ENCODE measurements at regions of chr16 and their contacts with region 1.

Region 1: DNA sequence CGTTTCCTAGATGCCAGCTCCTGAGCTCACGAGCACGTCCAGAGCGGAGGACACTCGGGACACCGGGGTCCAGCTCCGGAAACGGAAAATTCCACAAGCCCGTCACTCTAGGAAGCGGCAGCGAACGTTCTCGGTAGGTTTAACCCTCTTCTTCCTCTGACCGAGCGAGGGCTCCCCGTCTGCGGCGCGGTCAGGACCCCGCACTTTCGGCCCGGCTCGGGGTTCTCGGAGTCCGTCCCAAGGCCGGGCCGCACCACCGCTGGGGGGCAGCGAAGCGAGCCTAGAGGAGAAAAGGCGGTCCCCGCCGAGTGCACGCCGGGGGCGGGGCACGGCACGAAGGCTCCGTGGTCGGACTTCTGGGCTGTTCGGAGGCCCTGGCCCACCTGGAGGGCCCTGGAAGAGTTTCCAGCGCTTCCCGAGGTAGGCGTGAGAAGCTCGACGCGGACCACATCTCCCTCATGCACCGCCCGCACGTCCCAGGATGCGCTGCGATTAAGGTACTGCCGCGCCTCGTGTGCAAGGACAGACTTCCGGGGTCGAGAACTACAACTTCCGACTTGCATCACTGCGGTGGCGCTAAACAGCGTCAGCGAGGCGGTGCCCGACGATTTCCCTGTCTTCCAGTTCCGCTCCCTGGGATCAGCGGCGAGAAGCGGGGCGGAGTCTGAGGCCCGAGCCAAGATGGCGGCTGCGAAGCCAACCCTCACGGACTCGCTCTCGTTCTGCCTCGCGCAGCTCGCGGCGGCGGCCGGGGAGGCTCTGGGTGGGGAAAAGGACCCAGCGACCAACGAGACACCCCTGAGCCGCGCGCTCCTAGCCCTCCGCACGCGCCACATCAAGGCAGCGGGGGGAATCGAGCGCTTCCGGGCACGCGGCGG is at the start of gene ARMC5:
- DNase-seq: peak; percentile 79 to 98 (median 88)
- ATAC-seq: peak; percentile 81
- H3K4me3 ChIP-seq: peak within 1 kb of the TSS; percentile 83
- H3K27ac ChIP-seq: peak within 1 kb of the TSS; percentile 99
- H3K4me1 ChIP-seq: peaks cover 30 to 52% of the 10 kb centered on the region in 2 experiments
- H3K27me3 ChIP-seq: no peaks in the 10 kb centered on the region
- CTCF ChIP-seq: peak; percentile 71 to 80 (median 79)
- EP300 ChIP-seq: peak; percentile 13; the same call in 1 of the 2 replicates
- POLR2A ChIP-seq: peak; percentile 97
- RAD21 ChIP-seq: peak; percentile 39 to 53; a peak in 3 of 4 replicates
- polyA plus RNA-seq, gene ARMC5: 0.11 to 0.17 TPM

Region 2: GRCh38 chr16:30957456-30958174 is 501.5 kb before region 1 on chr16 and contains the start of gene SETD1A:
- CTCF ChIA-PET with region 1: no interaction called
- POLR2A ChIA-PET with region 1: no interaction called
- in situ Hi-C with region 1: no loop called
- intact Hi-C with region 1: loop called (anchors 10 kb)
- DNase-seq: peak; percentile 77 to 97 (median 89)
- ATAC-seq: peak; percentile 89
- H3K4me3 ChIP-seq: peak within 1 kb of the TSS; percentile 96
- H3K27ac ChIP-seq: peak within 1 kb of the TSS; percentile 99
- H3K4me1 ChIP-seq: peaks cover 27 to 35% of the 10 kb centered on the region in 2 experiments; a peak in 4 of 5 replicates
- H3K27me3 ChIP-seq: no peaks in the 10 kb centered on the region
- CTCF ChIP-seq: no peak
- EP300 ChIP-seq: peak; percentile 95
- POLR2A ChIP-seq: peak; percentile 74
- RAD21 ChIP-seq: no peak
- polyA plus RNA-seq, gene SETD1A: 0.08 to 0.14 TPM

Region 3: DNA sequence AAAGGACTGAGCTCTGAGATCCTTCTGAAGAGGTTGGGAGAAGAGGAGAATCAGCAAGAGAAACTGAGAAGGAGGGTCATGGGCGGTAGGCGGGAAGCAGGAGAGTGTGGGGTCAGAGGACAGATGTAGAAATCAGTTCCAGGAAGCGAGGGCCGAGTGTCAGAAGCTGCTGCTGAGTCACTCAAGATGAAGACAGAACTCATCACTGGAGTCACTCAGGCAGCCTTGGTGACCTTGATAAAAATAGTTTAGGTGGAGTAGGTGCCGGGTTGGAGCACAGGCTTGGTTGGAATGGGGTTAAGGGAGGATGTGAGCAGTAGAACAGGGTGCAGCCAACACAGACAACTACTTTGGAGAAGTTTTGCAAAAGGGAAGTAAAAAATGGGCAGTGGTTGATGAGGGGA is 205.4 kb before region 1 on chr16:
- CTCF ChIA-PET with region 1: no interaction called
- POLR2A ChIA-PET with region 1: no interaction called
- in situ Hi-C with region 1: no loop called
- intact Hi-C with region 1: no loop called
- DNase-seq: peak; percentile 74 to 95 (median 84)
- ATAC-seq: peak; percentile 98
- H3K4me3 ChIP-seq: no peak overlapping the region
- H3K27ac ChIP-seq: peak overlapping the region; percentile 52
- H3K4me1 ChIP-seq: peaks cover 23 to 29% of the 10 kb centered on the region in 2 experiments
- H3K27me3 ChIP-seq: no peaks in the 10 kb centered on the region
- CTCF ChIP-seq: no peak; a peak in 1 of 6 replicates
- EP300 ChIP-seq: peak; percentile 88
- POLR2A ChIP-seq: no peak
- RAD21 ChIP-seq: no peak; a peak in 1 of 4 replicates

Region 4: DNA sequence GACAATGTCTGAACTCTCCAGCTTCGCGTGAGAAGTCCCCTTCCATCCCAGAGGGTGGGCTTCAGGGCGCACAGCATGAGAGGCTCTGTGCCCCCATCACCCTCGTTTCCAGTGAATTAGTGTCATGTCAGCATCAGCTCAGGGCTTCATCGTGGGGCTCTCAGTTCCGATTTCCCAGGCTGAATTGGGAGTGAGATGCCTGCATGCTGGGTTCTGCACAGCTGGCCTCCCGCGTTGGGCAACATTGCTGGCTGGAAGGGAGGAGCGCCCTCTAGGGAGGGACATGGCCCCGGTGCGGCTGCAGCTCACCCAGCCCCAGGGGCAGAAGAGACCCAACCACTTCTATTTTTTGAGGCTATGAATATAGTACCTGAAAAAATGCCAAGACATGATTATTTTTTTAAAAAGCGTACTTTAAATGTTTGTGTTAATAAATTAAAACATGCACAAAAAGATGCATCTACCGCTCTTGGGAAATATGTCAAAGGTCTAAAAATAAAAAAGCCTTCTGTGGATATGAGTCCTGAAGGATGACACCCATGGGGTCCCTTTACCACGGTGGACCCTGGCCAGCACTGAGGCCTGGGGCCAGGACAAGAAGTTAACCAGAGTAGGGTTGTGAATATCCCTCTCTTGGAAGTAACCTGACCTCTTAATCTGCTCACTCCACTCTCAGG is 76.5 kb before region 1 on chr16:
- CTCF ChIA-PET with region 1: no interaction called
- POLR2A ChIA-PET with region 1: no interaction called
- in situ Hi-C with region 1: no loop called
- intact Hi-C with region 1: no loop called
- DNase-seq: peak; percentile 71 to 82 (median 72)
- ATAC-seq: peak; percentile 96
- H3K4me3 ChIP-seq: no peak overlapping the region
- H3K27ac ChIP-seq: no peak overlapping the region
- H3K4me1 ChIP-seq: peaks cover 0 to 5% of the 10 kb centered on the region in 2 experiments; a peak in 2 of 5 replicates
- H3K27me3 ChIP-seq: peaks cover 3 to 34% of the 10 kb centered on the region in 2 experiments; a peak in 4 of 5 replicates
- CTCF ChIP-seq: peak; percentile 82 to 90 (median 86)
- EP300 ChIP-seq: no peak
- POLR2A ChIP-seq: no peak
- RAD21 ChIP-seq: peak; percentile 56 to 83

Region 5: DNA sequence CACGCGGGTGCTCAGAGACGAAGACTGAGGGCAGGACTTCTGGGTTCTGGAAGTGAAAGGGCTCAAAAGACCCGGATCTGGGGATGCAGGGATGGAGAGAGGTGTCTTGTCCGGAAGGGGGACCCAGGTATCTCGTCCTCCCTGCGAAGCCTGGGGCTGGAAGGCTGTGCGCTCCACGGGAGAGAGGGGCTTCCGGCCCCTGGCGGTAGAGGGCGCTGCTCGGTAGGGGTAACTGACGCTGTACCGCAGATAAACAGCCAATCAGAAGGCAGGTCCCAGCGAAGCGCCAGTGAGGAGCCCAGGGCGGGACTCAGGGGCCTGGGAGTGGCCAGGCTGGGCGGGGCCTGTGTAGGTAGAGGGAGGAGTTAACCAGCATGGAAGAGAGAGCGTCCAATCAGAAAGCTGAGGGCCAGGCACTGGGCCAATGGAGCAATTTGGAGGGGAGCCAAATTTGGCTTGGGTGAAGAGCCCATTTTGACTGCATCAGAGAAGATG is 13.7 kb after region 1 on chr16:
- CTCF ChIA-PET with region 1: no interaction called
- POLR2A ChIA-PET with region 1: interaction called, 15 read pairs
- in situ Hi-C with region 1: no loop called
- intact Hi-C with region 1: no loop called
- DNase-seq: peak; percentile 71 to 86 (median 76)
- ATAC-seq: peak; percentile 64
- H3K4me3 ChIP-seq: no peak overlapping the region
- H3K27ac ChIP-seq: no peak overlapping the region
- H3K4me1 ChIP-seq: peaks cover 19 to 52% of the 10 kb centered on the region in 2 experiments; a peak in 4 of 5 replicates
- H3K27me3 ChIP-seq: no peaks in the 10 kb centered on the region
- CTCF ChIP-seq: peak in 1 of 3 experiments; percentile 26; a peak in 2 of 6 replicates
- EP300 ChIP-seq: no peak
- POLR2A ChIP-seq: no peak
- RAD21 ChIP-seq: no peak

Region 6: DNA sequence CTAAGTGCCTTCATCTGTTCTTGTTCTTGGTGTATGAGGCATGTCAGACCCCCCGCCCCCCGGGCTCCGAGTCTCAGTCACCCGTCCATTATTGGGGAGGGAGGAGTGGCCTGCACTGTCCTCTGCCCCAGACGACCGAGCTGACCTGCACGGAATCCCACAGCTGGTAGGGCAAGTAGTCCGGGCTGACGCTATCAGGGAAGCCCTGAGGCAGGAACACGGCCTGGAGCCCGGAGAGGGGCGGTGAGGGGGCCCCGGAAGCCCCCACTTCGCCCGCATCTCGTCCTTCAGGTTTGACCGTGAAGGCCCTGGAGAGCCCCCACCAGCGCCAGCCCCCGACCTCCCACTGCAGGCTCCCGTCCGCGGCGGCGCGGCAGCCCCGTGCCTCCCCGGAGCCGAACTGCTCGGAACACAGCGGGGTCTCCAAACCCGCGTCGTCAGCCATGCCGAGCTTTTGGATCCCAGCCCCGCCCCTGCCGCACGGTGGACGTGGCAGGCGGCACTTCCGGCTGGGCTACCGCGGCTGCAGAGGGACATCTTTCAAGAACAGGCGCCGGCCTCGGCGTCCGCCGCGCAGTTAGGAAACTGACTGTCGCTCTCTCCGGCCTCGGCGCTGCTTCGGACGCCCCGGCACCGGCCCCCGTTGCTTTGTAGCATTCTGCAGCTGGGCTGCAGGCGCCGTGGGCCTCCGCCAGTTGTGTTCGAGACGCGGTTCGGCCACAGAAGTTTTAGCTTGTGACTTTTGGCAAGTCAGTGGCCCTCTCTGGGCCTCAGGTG is 49.0 kb after region 1 on chr16 and contains the start of gene RUSF1:
- CTCF ChIA-PET with region 1: no interaction called
- POLR2A ChIA-PET with region 1: interaction called, 7 read pairs
- in situ Hi-C with region 1: no loop called
- intact Hi-C with region 1: loop called (anchors 5 kb)
- DNase-seq: peak; percentile 84 to 94 (median 86)
- ATAC-seq: peak; percentile 90
- H3K4me3 ChIP-seq: peak within 1 kb of the TSS; percentile 79
- H3K27ac ChIP-seq: peak within 1 kb of the TSS; percentile 92
- H3K4me1 ChIP-seq: peaks cover 10 to 24% of the 10 kb centered on the region in 2 experiments; a peak in 4 of 5 replicates
- H3K27me3 ChIP-seq: no peaks in the 10 kb centered on the region
- CTCF ChIP-seq: no peak
- EP300 ChIP-seq: peak; percentile 50
- POLR2A ChIP-seq: peak; percentile 91
- RAD21 ChIP-seq: no peak
- polyA plus RNA-seq, gene RUSF1: 0.80 to 0.89 TPM

Region 7: GRCh38 chr16:31700526-31701388 is 241.7 kb after region 1 on chr16:
- CTCF ChIA-PET with region 1: interaction called, 4 read pairs
- POLR2A ChIA-PET with region 1: interaction called, 6 read pairs
- in situ Hi-C with region 1: loop called (anchors 10 kb)
- intact Hi-C with region 1: no loop called
- DNase-seq: peak in 3 of 4 experiments; percentile 39 to 93 (median 56)
- ATAC-seq: peak; percentile 71
- H3K4me3 ChIP-seq: peak overlapping the region; percentile 84
- H3K27ac ChIP-seq: peak overlapping the region; percentile 66
- H3K4me1 ChIP-seq: peaks cover 5 to 8% of the 10 kb centered on the region in 2 experiments; a peak in 3 of 5 replicates
- H3K27me3 ChIP-seq: no peaks in the 10 kb centered on the region
- CTCF ChIP-seq: 0 out of 6 replicates have a peak, but pooled peaks of 1 of the 3 experiments have one; percentile 19
- EP300 ChIP-seq: no peak
- POLR2A ChIP-seq: peak; percentile 79
- RAD21 ChIP-seq: no peak

Region 8: GRCh38 chr16:31754998-31755615 is 296.0 kb after region 1 on chr16:
- CTCF ChIA-PET with region 1: no interaction called
- POLR2A ChIA-PET with region 1: no interaction called
- in situ Hi-C with region 1: no loop called
- intact Hi-C with region 1: no loop called
- DNase-seq: no peak
- ATAC-seq: no peak
- H3K4me3 ChIP-seq: no peak overlapping the region
- H3K27ac ChIP-seq: no peak overlapping the region
- H3K4me1 ChIP-seq: no peaks in the 10 kb centered on the region
- H3K27me3 ChIP-seq: no peaks in the 10 kb centered on the region
- CTCF ChIP-seq: no peak
- EP300 ChIP-seq: no peak
- POLR2A ChIP-seq: no peak
- RAD21 ChIP-seq: no peak

Region 9: GRCh38 chr16:31868691-31869167 is 409.6 kb after region 1 on chr16:
- CTCF ChIA-PET with region 1: no interaction called
- POLR2A ChIA-PET with region 1: interaction called, 3 read pairs
- in situ Hi-C with region 1: no loop called
- intact Hi-C with region 1: loop called (anchors 10 kb)
- DNase-seq: peak; percentile 66 to 85 (median 70)
- ATAC-seq: peak; percentile 85
- H3K4me3 ChIP-seq: no peak overlapping the region
- H3K27ac ChIP-seq: no peak overlapping the region
- H3K4me1 ChIP-seq: no peaks in the 10 kb centered on the region; a peak in 4 of 5 replicates
- H3K27me3 ChIP-seq: peaks cover 0 to 4% of the 10 kb centered on the region in 2 experiments; a peak in 1 of 5 replicates
- CTCF ChIP-seq: peak; percentile 69 to 77 (median 75)
- EP300 ChIP-seq: no peak
- POLR2A ChIP-seq: no peak
- RAD21 ChIP-seq: peak; percentile 67 to 73